Mammary epithelial cell (primary cell): ENCODE measurements at regions of chr10 and their contacts with region 1.

Region 1: DNA sequence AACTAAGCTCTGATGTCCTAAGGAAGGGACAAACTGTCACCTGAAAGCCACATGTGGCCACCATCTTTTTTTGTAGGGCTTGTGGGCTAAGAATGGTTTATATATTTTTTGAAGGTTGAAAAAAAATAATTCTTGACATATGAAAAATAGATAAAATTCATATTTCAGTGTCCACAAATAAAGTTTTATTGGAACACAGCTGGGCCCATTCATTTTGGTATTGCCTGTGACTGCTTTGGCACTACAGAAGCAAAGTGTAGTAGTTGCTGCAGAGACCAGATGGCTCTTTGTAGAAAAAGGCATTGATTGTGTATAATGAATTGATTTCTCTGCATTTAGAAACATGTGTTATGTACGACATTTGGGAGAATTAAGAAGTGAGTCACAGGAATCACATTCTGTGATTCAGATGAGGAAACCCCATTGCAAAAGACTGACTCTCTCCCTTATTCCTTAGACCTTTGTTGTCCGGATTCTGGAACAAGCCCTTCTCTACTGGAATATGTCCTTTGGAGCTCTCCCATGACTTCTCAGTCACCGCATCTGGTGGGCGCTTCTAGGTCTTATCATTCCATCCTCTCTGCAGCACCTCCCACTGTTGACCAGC is 438.7 kb downstream of the LRMDA start:
- DNase-seq: peak; percentile 25
- H3K4me3 ChIP-seq: no peak overlapping the region
- H3K27ac ChIP-seq: no peak overlapping the region
- H3K4me1 ChIP-seq: no peaks in the 10 kb centered on the region
- H3K27me3 ChIP-seq: no peaks in the 10 kb centered on the region
- CTCF ChIP-seq: no peak

Region 2: DNA sequence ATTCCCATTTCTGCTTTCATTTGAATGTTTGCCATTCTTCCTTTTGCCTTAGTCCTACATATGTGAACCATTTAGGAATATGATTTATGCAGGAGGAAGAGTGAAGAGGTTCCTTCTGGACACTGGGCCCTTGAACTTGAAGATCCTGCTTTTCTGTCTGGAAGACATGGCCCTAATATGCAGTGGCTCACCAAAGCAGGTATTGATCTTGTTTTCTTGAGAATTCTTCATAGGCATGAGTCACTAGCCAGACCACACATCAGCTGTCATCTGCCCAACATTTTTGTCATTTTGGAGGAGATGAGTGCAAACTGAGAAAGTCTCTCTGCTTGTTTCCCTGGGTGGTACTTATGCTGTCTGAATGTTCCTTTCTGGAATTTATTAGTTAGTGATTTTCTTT is 56.1 kb before region 1 on chr10:
- CTCF ChIA-PET with region 1: no interaction called
- dilution Hi-C with region 1: no loop called
- in situ Hi-C with region 1: no loop called
- intact Hi-C with region 1: no loop called
- DNase-seq: no peak
- H3K4me3 ChIP-seq: no peak overlapping the region
- H3K27ac ChIP-seq: no peak overlapping the region
- H3K4me1 ChIP-seq: no peaks in the 10 kb centered on the region
- H3K27me3 ChIP-seq: peaks cover 2% of the 10 kb centered on the region
- CTCF ChIP-seq: no peak

Region 3: GRCh38 chr10:75838486-75838885 is 31.7 kb before region 1 on chr10:
- CTCF ChIA-PET with region 1: no interaction called
- dilution Hi-C with region 1: loop called (anchors 5 kb)
- in situ Hi-C with region 1: no loop called
- intact Hi-C with region 1: no loop called
- DNase-seq: no peak
- H3K4me3 ChIP-seq: no peak overlapping the region
- H3K27ac ChIP-seq: no peak overlapping the region
- H3K4me1 ChIP-seq: no peaks in the 10 kb centered on the region
- H3K27me3 ChIP-seq: no peaks in the 10 kb centered on the region
- CTCF ChIP-seq: no peak

Region 4: DNA sequence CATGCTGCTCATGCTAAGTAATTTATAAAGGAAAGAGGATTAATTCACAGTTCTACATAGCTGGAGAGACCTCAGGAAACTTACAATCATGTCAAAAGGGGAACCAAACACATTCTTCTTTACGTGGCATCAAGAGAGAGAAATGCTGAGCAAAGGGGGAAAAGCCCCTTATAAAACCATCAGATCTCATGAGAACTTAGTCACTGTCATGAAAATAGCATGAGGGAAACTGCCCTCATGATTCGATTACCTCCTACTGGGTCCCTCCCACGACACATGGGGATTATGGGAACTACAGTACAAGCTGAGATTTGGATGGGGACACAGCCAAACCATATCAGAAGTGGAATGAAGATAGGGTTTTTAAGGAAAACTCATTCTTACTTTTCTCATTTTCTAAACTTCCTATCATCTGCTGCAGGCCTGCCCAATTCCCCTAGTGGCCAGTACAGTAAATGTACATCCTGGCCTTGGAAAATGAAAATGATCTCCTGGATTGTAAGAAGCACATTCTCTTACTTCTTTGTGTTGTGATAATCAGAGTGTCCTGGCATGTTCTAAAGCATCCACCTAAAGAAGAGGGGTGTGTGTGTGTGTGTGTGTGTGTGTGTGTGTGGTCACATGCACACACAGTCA is 17.2 kb before region 1 on chr10:
- CTCF ChIA-PET with region 1: no interaction called
- dilution Hi-C with region 1: no loop called
- in situ Hi-C with region 1: no loop called
- intact Hi-C with region 1: no loop called
- DNase-seq: no peak
- H3K4me3 ChIP-seq: no peak overlapping the region
- H3K27ac ChIP-seq: no peak overlapping the region
- H3K4me1 ChIP-seq: no peaks in the 10 kb centered on the region
- H3K27me3 ChIP-seq: no peaks in the 10 kb centered on the region
- CTCF ChIP-seq: peak; percentile 36 to 47